Body of pancreas (tissue), 4 donors: ENCODE measurements at regions of chr3 and their contacts with region 1.

Region 1: DNA sequence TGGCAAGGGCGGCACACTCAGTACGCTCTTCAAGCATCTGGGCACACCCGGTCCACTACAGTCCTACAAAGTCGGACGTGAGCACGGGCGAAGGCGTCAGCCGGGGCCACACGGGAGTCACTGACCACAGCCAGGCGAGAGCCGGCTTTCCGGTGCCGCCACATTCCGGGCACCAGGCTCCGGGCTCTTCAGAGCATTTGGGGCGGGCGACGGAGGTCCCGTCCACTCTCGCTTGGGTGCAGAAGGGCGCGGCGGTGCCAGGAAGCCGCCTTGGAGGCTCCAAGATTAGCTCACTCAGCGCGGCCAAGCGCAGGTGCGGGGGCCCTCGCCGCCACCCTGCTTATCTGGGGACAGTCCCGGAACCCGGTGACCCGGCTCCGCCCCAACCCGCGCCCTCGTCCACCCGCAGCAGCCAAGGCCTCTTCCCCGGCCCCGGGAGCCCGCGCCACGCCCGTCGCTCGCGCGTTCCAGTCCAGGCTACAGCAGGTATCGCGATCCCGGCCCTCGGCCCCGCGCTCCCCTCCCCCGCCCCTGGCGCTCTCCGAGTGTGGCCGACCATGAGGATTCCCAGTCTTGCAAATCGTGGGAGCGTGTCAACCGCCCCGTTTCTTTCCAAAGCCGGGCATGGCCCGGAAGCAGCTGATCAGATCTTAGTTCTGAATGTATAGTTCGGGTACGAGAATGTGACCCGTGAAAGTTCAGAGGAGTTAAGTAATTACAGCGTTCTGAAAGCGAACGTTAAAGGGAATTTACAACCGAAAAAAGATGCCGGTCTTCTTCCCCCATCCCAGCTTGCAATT is at the start of gene ADPRH:
- DNase-seq: peak; percentile 87 to 91 (median 88)
- ATAC-seq: peak; percentile 96
- H3K4me3 ChIP-seq: peak within 1 kb of the TSS; percentile 26 to 46
- H3K27ac ChIP-seq: peak within 1 kb of the TSS; percentile 79 to 95 (median 92)
- H3K4me1 ChIP-seq: peaks cover 18% of the 10 kb centered on the region
- H3K27me3 ChIP-seq: no peaks in the 10 kb centered on the region
- CTCF ChIP-seq: peak in 1 of 7 experiments; percentile 3
- POLR2A ChIP-seq: peak; percentile 72 to 91 (median 84)
- total RNA-seq, gene ADPRH: 3.0 to 6.5 TPM

Region 2: DNA sequence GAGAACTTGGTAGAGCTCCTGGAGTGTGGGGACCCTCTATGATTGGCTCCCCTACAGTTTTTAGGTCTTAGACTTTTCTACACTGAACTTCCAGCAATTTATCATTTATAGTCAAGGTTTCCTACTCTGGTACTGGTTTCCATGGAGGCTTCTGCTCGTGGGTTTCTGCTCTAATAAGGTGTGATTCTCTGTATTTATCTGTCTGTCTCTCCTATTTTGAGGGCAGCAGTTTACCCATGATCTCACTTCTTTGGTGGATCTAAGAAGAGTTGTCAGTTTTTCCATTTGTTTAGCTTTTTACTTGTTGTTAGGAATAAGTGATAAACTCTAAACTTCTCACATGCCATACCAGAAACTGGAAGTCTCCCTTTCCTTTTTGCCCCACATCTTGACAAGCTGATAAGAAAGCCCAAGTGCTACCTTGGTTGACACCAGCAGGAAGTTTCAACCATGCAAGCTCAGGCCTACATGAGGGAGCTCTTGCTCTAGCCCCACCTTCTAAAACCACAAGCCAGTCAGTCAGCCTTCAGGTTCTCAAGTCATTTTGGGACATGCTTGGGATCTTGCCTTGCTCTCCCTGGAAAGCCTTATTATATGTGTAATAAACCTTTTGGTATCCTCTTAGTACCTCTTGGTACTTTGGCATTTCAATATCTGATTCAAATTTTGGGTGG is 71.3 kb before region 1 on chr3:
- intact Hi-C with region 1: loop called (anchors 10 kb)
- DNase-seq: no peak
- ATAC-seq: no peak
- H3K4me3 ChIP-seq: no peak overlapping the region
- H3K27ac ChIP-seq: no peak overlapping the region
- H3K4me1 ChIP-seq: no peaks in the 10 kb centered on the region
- H3K27me3 ChIP-seq: no peaks in the 10 kb centered on the region
- CTCF ChIP-seq: no peak
- POLR2A ChIP-seq: no peak

Region 3: DNA sequence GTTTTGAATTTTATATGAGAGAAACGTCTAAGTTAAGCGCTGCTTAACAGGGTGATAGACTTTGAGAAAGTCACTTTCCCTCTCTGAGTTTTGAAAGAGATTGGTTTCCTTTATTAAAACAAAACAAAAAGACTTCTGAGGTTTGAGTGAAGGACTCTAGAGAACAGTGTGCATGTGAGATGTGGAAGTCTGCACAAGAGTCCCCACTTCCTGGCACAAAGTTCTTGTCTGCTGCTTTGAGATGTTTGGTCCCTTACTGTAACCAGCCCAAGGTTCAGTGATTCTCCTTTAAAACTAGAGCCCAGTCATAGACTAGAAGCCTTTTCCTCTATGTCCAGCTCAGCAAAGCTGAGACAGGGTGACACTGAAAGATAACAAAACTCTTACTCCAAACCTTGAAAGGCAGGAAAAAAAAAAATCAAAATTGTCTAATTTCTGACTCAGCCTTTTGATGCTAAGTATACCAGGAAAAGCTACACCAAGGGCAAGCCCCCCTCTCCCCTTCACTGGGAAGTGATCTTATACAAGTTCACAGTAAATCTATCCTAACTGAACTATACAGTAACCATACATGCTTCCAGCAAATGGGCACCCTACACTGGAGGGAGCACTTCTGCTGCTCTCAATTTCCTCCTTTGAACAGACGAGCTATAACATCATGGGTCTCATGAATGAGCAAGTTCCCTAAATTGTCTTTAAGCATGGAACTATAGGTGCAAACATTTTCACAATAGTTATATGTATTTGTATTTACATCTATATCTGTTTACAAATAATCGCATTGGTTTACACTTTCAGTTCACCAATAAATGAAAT is 78.5 kb after region 1 on chr3:
- intact Hi-C with region 1: no loop called
- DNase-seq: no peak
- ATAC-seq: no peak
- H3K4me3 ChIP-seq: no peak overlapping the region
- H3K27ac ChIP-seq: no peak overlapping the region
- H3K4me1 ChIP-seq: peaks cover 11% of the 10 kb centered on the region
- H3K27me3 ChIP-seq: no peaks in the 10 kb centered on the region
- CTCF ChIP-seq: no peak
- POLR2A ChIP-seq: no peak